ENCODE measurements at regions of chr10 and their contacts with region 1.

Region 1: DNA sequence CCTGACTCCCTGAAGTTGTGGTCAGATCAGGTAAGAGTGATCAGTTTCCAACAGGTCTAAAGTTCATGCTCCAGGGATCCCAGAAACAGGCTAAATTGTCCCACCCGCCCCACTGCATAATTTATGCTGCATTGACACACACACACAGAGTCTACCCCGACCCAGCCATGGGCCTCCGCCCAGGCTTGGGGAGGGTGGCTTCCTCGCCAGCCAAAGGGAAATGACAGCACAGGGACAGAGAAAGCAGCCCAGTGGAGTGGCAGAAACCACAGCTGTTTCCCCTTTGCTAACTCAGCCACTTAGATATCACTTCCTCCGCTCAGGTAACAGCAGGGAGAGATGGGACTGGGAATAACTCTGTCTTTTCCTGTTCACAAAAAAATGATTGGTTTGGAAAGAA is 9.4 kb downstream of the SH3PXD2A start:
- DNase-seq: no peak
- H3K4me3 ChIP-seq: no peak overlapping the region
- H3K27ac ChIP-seq: no peak overlapping the region
- H3K4me1 ChIP-seq: peaks cover 6 to 9% (median 7%) of the 10 kb centered on the region in 4 experiments; a peak in 6 of 7 replicates
- H3K27me3 ChIP-seq: no peaks in the 10 kb centered on the region
- CTCF ChIP-seq: no peak
- EP300 ChIP-seq: no peak
- POLR2A ChIP-seq: no peak
- RAD21 ChIP-seq: no peak

Region 2: GRCh38 chr10:103733045-103733419 is 112.9 kb before region 1 on chr10:
- CTCF ChIA-PET with region 1: interaction called, 12 read pairs
- POLR2A ChIA-PET with region 1: no interaction called
- DNase-seq: no peak
- H3K4me3 ChIP-seq: no peak overlapping the region
- H3K27ac ChIP-seq: no peak overlapping the region
- H3K4me1 ChIP-seq: peaks cover 0 to 18% (median 12%) of the 10 kb centered on the region in 4 experiments; a peak in 6 of 7 replicates
- H3K27me3 ChIP-seq: no peaks in the 10 kb centered on the region
- CTCF ChIP-seq: no peak
- EP300 ChIP-seq: no peak
- POLR2A ChIP-seq: no peak
- RAD21 ChIP-seq: no peak

Region 3: GRCh38 chr10:103745341-103746227 is 100.4 kb before region 1 on chr10:
- CTCF ChIA-PET with region 1: interaction called, 29 read pairs
- POLR2A ChIA-PET with region 1: no interaction called
- DNase-seq: no peak
- H3K4me3 ChIP-seq: no peak overlapping the region
- H3K27ac ChIP-seq: no peak overlapping the region; the same call in 1 of the 2 replicates
- H3K4me1 ChIP-seq: no peaks in the 10 kb centered on the region; a peak in 2 of 7 replicates
- H3K27me3 ChIP-seq: no peaks in the 10 kb centered on the region; a peak in 1 of 7 replicates
- CTCF ChIP-seq: peak; percentile 15 to 29 (median 16); a peak in 3 of 4 replicates
- EP300 ChIP-seq: no peak
- POLR2A ChIP-seq: no peak
- RAD21 ChIP-seq: peak in 1 of 2 experiments; percentile 28; a peak in 3 of 4 replicates

Region 4: GRCh38 chr10:103765981-103766380 is 80.0 kb before region 1 on chr10:
- CTCF ChIA-PET with region 1: interaction called, 11 read pairs
- POLR2A ChIA-PET with region 1: no interaction called
- DNase-seq: no peak
- H3K4me3 ChIP-seq: no peak overlapping the region
- H3K27ac ChIP-seq: no peak overlapping the region
- H3K4me1 ChIP-seq: peaks cover 7 to 14% (median 10%) of the 10 kb centered on the region in 4 experiments
- H3K27me3 ChIP-seq: no peaks in the 10 kb centered on the region
- CTCF ChIP-seq: no peak
- EP300 ChIP-seq: no peak
- POLR2A ChIP-seq: no peak
- RAD21 ChIP-seq: no peak

Region 5: GRCh38 chr10:103820101-103821062 is 25.6 kb before region 1 on chr10:
- CTCF ChIA-PET with region 1: interaction called, 17 read pairs
- POLR2A ChIA-PET with region 1: no interaction called
- DNase-seq: no peak
- H3K4me3 ChIP-seq: no peak overlapping the region
- H3K27ac ChIP-seq: no peak overlapping the region
- H3K4me1 ChIP-seq: peaks cover 0 to 4% (median under 1%) of the 10 kb centered on the region in 4 experiments; a peak in 4 of 7 replicates
- H3K27me3 ChIP-seq: no peaks in the 10 kb centered on the region
- CTCF ChIP-seq: no peak
- EP300 ChIP-seq: no peak
- POLR2A ChIP-seq: no peak
- RAD21 ChIP-seq: no peak

Region 6: DNA sequence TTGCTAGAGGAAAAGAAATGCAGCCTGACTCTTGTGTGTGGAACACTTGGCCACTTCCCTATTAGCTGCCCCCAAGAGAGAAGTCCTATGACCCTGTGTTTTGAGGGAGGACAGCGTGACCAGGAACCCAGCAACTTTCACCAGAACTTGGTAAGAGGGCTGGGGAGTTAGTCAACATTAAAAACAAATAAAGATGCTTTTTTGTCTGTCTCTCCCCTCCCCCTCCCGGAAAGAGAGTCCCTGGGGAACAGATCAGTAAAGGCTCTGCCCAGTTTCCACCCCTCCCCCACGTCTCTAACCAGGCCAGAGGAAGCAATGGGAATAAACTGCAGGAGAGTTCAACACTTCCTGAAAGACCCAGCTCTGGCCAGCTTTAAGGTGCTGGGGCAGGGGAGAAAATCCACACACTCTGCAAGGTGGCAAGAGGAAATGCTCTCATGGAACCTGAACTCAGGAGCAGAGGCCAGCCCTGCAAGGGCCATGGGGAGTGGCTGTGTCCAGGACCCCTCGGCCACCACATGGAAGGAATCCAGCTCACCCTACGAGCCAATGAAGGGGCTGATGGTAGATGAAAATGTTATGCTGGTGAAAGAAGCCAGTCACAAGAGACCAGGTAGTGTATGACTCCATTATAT is 12.1 kb before region 1 on chr10:
- CTCF ChIA-PET with region 1: interaction called, 20 read pairs
- POLR2A ChIA-PET with region 1: interaction called, 4 read pairs
- DNase-seq: no peak
- H3K4me3 ChIP-seq: peak overlapping the region in 1 of 4 experiments; percentile 18; a peak in 1 of 8 replicates
- H3K27ac ChIP-seq: peak overlapping the region; percentile 56; the same call in 1 of the 2 replicates
- H3K4me1 ChIP-seq: peaks cover 12 to 21% (median 18%) of the 10 kb centered on the region in 4 experiments
- H3K27me3 ChIP-seq: no peaks in the 10 kb centered on the region
- CTCF ChIP-seq: no peak
- EP300 ChIP-seq: no peak
- POLR2A ChIP-seq: no peak
- RAD21 ChIP-seq: no peak

Region 7: DNA sequence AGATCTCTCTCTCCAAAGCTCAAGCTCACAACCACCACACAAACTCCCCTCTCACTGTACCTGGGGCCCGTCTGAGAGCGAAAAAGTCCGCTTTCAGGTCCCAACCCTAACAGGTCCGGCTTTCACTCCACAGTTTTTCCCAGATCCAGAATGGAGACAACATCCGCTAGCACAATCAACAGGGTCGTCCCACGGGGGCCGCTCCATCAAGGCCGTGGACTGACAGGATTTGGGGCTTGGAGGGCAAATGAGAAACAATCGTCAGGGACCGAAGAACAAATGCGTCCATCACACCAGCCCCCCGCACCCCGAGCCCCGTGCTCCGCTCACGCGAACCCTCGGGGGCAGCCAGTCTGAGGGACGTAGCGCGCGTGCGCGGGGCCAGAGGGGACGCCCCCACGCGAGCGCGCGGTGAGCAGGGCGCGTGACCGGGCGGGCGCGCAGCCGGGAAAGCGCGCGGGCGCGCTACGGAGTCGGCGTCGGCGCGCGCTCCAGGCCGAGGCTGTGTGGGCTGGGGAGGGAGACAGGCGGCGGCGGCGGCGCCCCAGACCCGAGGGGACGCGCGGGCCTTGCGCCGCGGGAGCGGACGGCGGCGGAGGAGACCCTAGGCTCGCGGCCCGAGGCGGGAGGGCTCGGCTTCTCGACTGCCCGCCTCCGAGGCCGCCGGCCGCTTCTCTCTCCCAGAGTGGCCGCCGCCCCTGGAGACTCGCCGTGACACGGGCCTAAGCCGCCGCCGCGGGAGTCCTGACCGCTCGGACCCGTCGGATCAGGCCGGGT is 120.9 kb after region 1 on chr10 and contains the start of gene SLK:
- CTCF ChIA-PET with region 1: no interaction called
- POLR2A ChIA-PET with region 1: no interaction called
- DNase-seq: peak in 1 of 2 experiments; percentile 77
- H3K4me3 ChIP-seq: peak within 1 kb of the TSS; percentile 61 to 88 (median 80)
- H3K27ac ChIP-seq: no peak within 1 kb of the TSS
- H3K4me1 ChIP-seq: peaks cover 0 to 2% (median 0%) of the 10 kb centered on the region in 4 experiments; a peak in 1 of 7 replicates
- H3K27me3 ChIP-seq: peaks cover 0 to 5% (median 2%) of the 10 kb centered on the region in 4 experiments; a peak in 4 of 7 replicates
- CTCF ChIP-seq: no peak
- EP300 ChIP-seq: no peak
- POLR2A ChIP-seq: peak in 1 of 2 experiments; percentile 30; a peak in 1 of 3 replicates
- RAD21 ChIP-seq: no peak
- total RNA-seq, gene SLK: 18.3 and 18.8 TPM in 2 replicates